ENCODE measurements at regions of chr18 and their contacts with region 1.

Region 1: GRCh38 chr18:3839481-3840075 is 389.6 kb downstream of the TGIF1 start:
- DNase-seq: no peak
- ATAC-seq: no peak
- H3K4me3 ChIP-seq: no peak overlapping the region
- H3K4me3 Mint-ChIP-seq: no peak overlapping the region
- H3K27ac ChIP-seq: no peak overlapping the region
- H3K27ac Mint-ChIP-seq: no peak overlapping the region
- H3K4me1 ChIP-seq: no peaks in the 10 kb centered on the region
- H3K4me1 Mint-ChIP-seq: no peaks in the 10 kb centered on the region
- H3K27me3 ChIP-seq: no peaks in the 10 kb centered on the region
- H3K27me3 Mint-ChIP-seq: peaks cover 10% of the 10 kb centered on the region
- CTCF ChIP-seq: no peak

Region 2: DNA sequence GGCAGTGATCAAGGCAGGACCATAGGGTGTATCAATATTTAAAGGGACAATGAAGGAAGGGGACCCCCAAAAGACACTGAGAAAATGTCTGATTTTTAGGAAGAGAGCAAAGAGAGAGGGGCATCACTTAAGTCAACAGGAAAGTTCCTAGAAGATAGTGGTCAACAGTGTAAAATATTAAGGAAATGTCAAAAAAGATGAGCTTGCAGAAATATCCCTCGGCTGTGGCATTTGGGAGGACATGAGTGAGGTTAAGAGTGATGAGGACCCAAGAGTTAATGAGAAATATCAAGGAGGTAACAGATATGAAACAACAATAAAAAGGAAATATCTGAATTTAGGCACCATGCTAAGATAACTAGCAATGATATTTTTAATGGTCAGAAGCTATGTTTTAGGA is 50.1 kb before region 1 on chr18:
- CTCF ChIA-PET with region 1: no interaction called
- POLR2A ChIA-PET with region 1: no interaction called
- intact Hi-C with region 1: loop called in 1 of 2 experiments (anchors 2 kb)
- DNase-seq: no peak
- ATAC-seq: no peak
- H3K4me3 ChIP-seq: no peak overlapping the region
- H3K4me3 Mint-ChIP-seq: no peak overlapping the region
- H3K27ac ChIP-seq: no peak overlapping the region
- H3K27ac Mint-ChIP-seq: no peak overlapping the region
- H3K4me1 ChIP-seq: no peaks in the 10 kb centered on the region
- H3K4me1 Mint-ChIP-seq: no peaks in the 10 kb centered on the region
- H3K27me3 ChIP-seq: peaks cover 0 to 3% of the 10 kb centered on the region in 2 experiments
- H3K27me3 Mint-ChIP-seq: peaks cover 11% of the 10 kb centered on the region
- CTCF ChIP-seq: no peak

Measured in CD8-positive, alpha-beta T cell (primary cell).